WTC11 (cell line): ENCODE measurements at regions of chr17 and their contacts with region 1.

Region 1: GRCh38 chr17:57671667-57672632 is 73.1 kb downstream of the CCDC182 start:
- DNase-seq: peak; percentile 92
- ATAC-seq: peak; percentile 99
- H3K4me3 Mint-ChIP-seq: no peak overlapping the region
- H3K27ac Mint-ChIP-seq: no peak overlapping the region
- H3K4me1 Mint-ChIP-seq: peaks cover 14% of the 10 kb centered on the region
- H3K27me3 Mint-ChIP-seq: no peaks in the 10 kb centered on the region
- CTCF ChIP-seq: peak; percentile 91

Region 2: GRCh38 chr17:57130761-57131461 is 541.0 kb before region 1 on chr17:
- CTCF ChIA-PET with region 1: interaction called, 27 read pairs
- POLR2A ChIA-PET with region 1: no interaction called
- DNase-seq: peak; percentile 88
- ATAC-seq: peak; percentile 76
- H3K4me3 Mint-ChIP-seq: no peak overlapping the region
- H3K27ac Mint-ChIP-seq: no peak overlapping the region
- H3K4me1 Mint-ChIP-seq: peaks cover 30% of the 10 kb centered on the region
- H3K27me3 Mint-ChIP-seq: no peaks in the 10 kb centered on the region
- CTCF ChIP-seq: peak; percentile 92

Region 3: GRCh38 chr17:57552114-57552624 is 119.8 kb before region 1 on chr17:
- CTCF ChIA-PET with region 1: interaction called, 31 read pairs
- POLR2A ChIA-PET with region 1: no interaction called
- DNase-seq: peak; percentile 81
- ATAC-seq: peak; percentile 76
- H3K4me3 Mint-ChIP-seq: no peak overlapping the region
- H3K27ac Mint-ChIP-seq: peak overlapping the region; percentile 70; the same call in 1 of the 2 replicates
- H3K4me1 Mint-ChIP-seq: peaks cover 88% of the 10 kb centered on the region
- H3K27me3 Mint-ChIP-seq: no peaks in the 10 kb centered on the region
- CTCF ChIP-seq: peak; percentile 57

Region 4: DNA sequence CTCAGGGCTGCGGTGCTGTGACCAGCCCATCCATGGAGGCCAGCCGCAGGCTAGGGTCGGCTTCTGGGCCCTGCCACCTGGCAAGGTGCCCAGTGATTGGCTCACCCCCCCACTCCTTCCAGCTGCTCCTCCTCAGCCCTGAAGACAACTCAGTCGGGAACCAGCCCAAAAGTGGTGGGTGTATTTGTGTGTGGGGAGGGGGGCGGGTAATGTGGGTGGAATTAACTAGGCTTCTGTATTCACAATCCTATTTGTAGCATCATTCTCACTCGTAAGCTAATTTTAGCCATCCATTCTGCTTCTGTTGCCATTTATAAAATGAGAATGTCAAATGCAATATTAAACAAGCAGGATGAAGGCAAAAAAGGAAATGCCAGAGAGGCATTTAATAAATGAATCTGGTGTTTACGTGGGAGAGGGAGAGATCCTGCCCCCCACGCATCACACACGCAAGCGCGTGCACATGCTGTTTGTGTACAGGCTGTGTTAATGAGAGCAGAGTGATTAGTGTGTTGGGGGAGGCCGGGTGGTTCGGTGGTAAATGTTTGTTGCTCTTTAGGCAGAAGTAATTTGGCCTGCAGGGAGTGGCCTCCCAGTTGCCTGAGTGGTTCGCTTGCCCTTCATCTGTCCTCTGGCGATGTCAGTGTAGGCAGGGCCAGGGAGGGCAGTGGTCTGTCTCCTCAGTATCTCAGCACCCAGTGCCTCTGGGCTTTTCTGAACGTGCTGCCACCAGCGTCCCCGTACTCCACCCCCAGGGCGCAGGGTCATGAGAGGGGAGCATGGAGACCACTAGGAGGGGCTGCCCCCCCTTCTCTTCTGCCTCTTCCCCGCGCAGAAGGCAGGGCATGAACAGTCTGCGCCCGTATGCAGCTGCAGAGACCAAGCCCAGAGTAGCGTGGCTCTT is 66.9 kb before region 1 on chr17:
- CTCF ChIA-PET with region 1: interaction called, 107 read pairs
- POLR2A ChIA-PET with region 1: no interaction called
- DNase-seq: no peak
- ATAC-seq: peak; percentile 60
- H3K4me3 Mint-ChIP-seq: no peak overlapping the region
- H3K27ac Mint-ChIP-seq: peak overlapping the region; percentile 68; the same call in 1 of the 2 replicates
- H3K4me1 Mint-ChIP-seq: peaks cover 42% of the 10 kb centered on the region
- H3K27me3 Mint-ChIP-seq: no peaks in the 10 kb centered on the region
- CTCF ChIP-seq: no peak

Region 5: DNA sequence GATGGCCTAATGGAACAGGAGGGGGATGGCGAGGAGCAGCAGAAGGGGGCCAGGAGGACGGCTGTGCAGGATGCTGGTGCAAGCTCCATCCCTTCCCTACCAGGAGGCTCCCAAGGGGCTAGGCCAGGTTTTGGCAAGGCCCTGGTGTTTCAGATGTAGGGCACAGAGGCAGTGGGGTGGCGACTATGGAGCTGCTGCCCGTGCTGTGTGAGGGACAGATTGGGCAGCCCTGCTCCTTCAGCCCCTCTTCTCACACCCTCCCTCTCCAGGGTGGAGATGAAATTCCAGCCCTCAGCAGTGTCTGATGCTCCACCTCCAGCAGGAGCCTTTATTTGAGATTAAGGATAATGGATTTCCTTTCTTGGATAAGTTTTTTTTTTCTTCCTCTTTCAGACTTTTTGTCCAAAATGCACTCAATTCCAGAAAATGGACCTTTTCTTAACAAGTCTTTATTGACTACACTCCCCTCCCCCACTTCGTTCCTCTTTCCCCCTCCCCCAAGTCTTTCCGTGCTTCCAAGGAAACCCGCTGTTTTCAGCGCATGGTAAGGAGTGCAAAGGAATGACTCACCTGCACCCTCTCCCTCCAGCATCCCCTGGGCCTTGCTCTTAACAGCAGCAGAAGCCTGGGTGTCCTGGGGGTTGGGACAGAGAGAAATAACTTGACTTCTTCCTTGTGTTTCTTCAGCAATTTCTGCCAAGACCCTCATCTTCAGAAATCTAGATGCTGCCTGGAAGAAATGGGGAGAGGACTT is 22.0 kb before region 1 on chr17:
- CTCF ChIA-PET with region 1: interaction called, 44 read pairs
- POLR2A ChIA-PET with region 1: interaction called, 3 read pairs
- DNase-seq: peak; percentile 37
- ATAC-seq: peak; percentile 65
- H3K4me3 Mint-ChIP-seq: peak overlapping the region; percentile 35
- H3K27ac Mint-ChIP-seq: peak overlapping the region; percentile 50
- H3K4me1 Mint-ChIP-seq: peaks cover 24% of the 10 kb centered on the region
- H3K27me3 Mint-ChIP-seq: no peaks in the 10 kb centered on the region
- CTCF ChIP-seq: no peak

Region 6: DNA sequence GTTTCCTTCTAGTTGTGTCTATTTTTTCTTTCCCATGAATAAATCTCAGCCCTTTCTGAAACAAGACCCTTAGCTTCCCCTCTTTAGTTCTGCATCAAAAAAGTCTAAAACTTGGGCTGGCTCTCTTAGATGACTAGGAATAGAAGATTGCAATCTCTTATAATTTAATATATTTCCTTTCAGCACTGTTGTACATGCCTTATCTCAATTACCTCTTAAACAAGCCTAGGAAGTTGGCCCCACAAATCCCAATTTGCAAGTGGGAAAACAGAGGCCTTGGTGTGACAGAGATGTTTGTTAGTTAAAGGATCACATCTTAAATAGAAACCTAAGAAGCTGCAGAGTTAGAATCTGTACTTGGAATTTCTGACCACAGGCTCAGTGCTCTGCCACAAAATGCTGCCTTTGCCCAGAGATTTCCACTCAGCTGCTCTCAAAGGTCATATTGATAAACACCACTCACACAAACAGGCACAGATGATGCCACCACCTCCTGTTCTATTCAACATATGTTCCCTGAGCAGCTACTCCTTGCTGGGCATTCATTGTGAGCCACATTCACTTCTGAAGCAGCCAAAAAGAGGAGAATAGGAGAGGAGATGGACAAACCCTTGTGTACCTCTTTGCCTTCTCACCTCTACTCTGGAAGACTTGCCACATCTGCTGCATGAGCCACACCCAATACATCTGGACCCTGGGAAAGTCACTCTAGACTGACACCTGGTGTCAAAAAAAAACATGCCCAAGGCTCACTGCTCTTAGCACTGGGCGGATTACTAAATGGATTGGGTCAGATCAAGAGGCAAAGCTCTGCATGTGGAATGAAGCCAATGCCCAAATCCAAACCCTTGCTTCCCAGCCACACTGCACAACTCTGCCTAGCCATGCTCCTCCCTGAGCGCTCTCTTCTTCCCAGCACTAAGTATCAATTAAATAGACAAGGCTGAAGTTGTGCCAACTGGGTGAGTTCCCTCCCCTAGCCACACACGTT is 67.7 kb after region 1 on chr17:
- CTCF ChIA-PET with region 1: interaction called, 33 read pairs
- POLR2A ChIA-PET with region 1: no interaction called
- DNase-seq: no peak
- ATAC-seq: peak; percentile 87
- H3K4me3 Mint-ChIP-seq: no peak overlapping the region
- H3K27ac Mint-ChIP-seq: no peak overlapping the region
- H3K4me1 Mint-ChIP-seq: no peaks in the 10 kb centered on the region
- H3K27me3 Mint-ChIP-seq: no peaks in the 10 kb centered on the region
- CTCF ChIP-seq: no peak